ENCODE measurements at regions of chr16 and their contacts with region 1.

Region 1: DNA sequence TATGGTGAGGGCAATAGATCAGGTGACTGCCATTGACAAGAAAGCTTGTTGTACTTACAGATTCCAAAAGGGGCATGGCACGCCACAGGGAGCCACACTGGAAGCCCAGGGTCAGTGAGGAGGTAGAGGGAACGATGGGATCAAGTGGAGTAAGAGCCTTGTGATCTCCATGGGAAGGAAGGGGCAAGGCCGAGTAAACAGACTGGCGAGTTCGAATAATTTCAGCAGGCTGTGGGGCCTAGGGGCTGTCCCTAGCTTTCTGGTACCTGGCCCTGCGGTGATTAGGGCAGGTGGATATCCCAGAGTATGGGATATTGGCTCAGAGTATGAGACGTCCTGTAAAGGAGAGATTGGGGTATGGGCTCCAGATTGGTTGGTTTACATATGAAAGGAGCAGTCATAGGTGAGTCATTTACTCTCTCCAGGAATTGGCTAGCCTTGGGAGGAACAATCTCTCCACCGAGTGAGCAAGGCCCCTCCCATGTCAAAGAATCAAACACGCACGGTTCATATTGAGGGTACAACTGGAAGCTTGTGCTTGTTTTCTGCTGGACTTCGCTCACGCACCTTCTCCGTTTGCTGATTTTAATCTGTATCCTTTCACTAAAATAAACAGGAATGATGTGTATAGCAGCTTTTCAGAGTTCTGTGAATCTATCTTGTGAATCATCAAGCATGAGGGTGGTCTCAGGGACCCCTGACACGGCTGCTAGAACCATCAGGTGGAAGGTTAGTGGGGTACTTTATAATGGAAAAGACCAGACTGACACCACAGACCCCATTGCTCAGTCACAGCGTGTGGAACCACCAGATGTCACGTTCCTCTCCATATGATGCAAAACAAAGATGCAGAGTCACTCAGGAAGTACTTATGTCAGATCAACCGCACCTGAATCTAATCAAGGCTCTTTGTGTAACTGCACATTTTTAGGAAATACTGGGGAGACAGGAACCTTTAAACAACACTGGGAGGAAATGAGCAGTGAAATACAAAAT is 27.9 kb downstream of the GABARAPL2 start:
- DNase-seq: no peak
- H3K4me3 ChIP-seq: no peak overlapping the region
- H3K27ac ChIP-seq: peak overlapping the region; percentile 8 to 35
- H3K4me1 ChIP-seq: peaks cover 4 to 14% of the 10 kb centered on the region in 2 donors
- H3K27me3 ChIP-seq: no peaks in the 10 kb centered on the region
- CTCF ChIP-seq: no peak

Region 2: DNA sequence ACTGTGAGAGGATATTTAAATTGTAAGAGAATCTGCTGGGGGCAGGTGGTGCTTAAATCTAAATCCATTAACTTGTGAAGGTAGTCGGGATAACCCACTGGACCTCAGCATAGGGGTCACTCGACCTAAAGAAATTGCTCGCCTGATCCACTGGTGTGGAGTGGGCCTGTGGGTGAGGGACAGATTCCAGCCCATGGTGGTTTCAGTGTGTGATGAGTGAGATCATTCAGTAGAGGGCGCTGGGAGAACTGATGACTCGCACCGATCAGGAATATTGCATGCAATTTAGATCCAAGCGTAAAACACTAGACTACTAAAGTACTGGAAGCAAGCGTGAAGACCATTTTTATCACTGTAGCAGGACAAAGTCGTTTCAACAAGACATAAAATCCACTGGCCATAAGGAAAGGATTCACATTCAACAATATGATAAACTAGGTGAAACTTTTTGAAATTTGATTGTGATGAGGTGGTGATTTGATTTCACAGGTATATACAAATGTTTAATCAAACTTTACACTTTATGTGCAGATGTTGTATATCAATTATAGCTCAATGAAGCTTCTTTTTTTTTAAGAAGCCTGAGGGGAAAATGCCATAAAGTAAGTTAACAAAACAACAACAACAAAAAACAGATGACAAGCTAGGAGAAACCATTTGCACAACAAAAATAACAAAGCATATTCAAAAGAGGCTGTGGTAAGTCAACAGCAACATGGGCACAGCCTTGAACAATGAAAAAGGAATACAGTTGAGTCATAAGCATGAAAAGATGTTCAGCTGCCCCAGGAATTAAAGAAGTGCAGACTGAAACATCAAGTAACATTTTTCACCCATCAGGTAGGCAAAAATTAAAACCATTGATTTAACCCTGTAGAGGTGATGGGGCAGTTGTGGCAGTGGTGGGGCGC is 122.1 kb before region 1 on chr16:
- intact Hi-C with region 1: loop called (anchors 5 kb)
- DNase-seq: peak in 1 of 2 donors; percentile 75
- H3K4me3 ChIP-seq: no peak overlapping the region
- H3K27ac ChIP-seq: no peak overlapping the region
- H3K4me1 ChIP-seq: no peaks in the 10 kb centered on the region
- H3K27me3 ChIP-seq: no peaks in the 10 kb centered on the region
- CTCF ChIP-seq: peak; percentile 76 to 83 (median 79)

Region 3: GRCh38 chr16:75495076-75495674 is 98.9 kb before region 1 on chr16 and contains the start of gene CHST6:
- intact Hi-C with region 1: no loop called
- DNase-seq: no peak
- H3K4me3 ChIP-seq: peak within 1 kb of the TSS; percentile 61 to 70
- H3K27ac ChIP-seq: peak within 1 kb of the TSS; percentile 56 to 59
- H3K4me1 ChIP-seq: peaks cover 2 to 13% of the 10 kb centered on the region in 2 donors
- H3K27me3 ChIP-seq: no peaks in the 10 kb centered on the region
- CTCF ChIP-seq: no peak
- total RNA-seq, gene CHST6: 4.4 TPM

Region 4: DNA sequence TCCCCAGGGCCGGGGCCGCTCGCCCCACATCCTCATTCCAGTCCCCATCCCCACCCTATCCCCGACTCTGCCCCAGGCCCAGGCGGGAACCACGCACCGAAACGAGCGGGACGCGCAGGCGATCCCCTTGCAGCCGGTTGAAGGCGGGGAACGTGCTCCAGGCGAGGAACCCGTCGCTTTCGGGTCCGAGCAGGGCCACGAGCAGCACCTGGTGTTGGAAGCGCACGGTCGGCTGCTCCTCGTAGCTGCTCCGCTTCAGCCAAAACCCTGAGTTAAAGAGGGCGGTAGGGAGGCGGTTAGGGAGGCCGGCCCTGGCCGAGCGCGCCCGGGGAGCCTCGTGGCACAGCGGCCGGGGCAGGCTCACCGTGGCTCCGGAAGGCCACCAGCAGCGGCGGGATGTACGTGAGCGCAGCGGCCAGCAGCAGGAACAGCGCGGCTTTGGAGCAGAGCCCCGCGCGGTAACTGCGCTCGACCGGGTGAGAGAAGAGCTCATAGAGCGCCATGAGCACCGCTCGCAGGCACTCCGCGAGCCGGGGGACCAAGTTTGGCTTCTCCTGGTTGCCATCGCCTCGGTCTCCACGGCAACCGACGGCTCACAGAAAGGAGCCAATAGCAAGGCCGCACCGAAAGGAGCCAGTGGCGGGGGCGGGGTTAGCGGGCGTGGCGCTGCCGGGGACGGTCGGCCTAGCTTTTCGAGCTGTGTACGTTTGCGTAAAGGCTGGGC is 38.3 kb before region 1 on chr16 and contains the start of gene TMEM231:
- intact Hi-C with region 1: loop called (anchors 2 kb)
- DNase-seq: peak; percentile 91 to 99
- H3K4me3 ChIP-seq: peak within 1 kb of the TSS; percentile 64 to 84
- H3K27ac ChIP-seq: peak within 1 kb of the TSS; percentile 63 to 80
- H3K4me1 ChIP-seq: peaks cover 0 to 5% of the 10 kb centered on the region in 2 donors
- H3K27me3 ChIP-seq: no peaks in the 10 kb centered on the region
- CTCF ChIP-seq: no peak
- total RNA-seq, gene TMEM231: 59.9 TPM

Region 5: GRCh38 chr16:75584108-75584507 is 10.0 kb before region 1 on chr16:
- intact Hi-C with region 1: no loop called
- DNase-seq: no peak
- H3K4me3 ChIP-seq: no peak overlapping the region
- H3K27ac ChIP-seq: no peak overlapping the region
- H3K4me1 ChIP-seq: no peaks in the 10 kb centered on the region
- H3K27me3 ChIP-seq: no peaks in the 10 kb centered on the region
- CTCF ChIP-seq: no peak

Measured in ascending aorta (tissue), 2 donors.